Colonic mucosa (tissue), 4 donors: ENCODE measurements at regions of chr7 and their contacts with region 1.

Region 1: GRCh38 chr7:64562626-64563275 is at the start of gene ZNF680:
- DNase-seq: peak; percentile 97
- H3K4me3 ChIP-seq: peak within 1 kb of the TSS; percentile 83
- H3K27ac ChIP-seq: peak within 1 kb of the TSS; percentile 72
- H3K4me1 ChIP-seq: no peaks in the 10 kb centered on the region
- H3K27me3 ChIP-seq: no peaks in the 10 kb centered on the region
- CTCF ChIP-seq: no peak
- total RNA-seq, gene ZNF680: 7.2 to 11.4 TPM

Region 2: GRCh38 chr7:64313740-64314491 is 248.8 kb before region 1 on chr7 and contains the start of gene ZNF736:
- intact Hi-C with region 1: loop called (anchors 10 kb)
- DNase-seq: peak; percentile 91
- H3K4me3 ChIP-seq: peak within 1 kb of the TSS; percentile 91
- H3K27ac ChIP-seq: peak within 1 kb of the TSS; percentile 51
- H3K4me1 ChIP-seq: peaks cover 8% of the 10 kb centered on the region
- H3K27me3 ChIP-seq: no peaks in the 10 kb centered on the region
- CTCF ChIP-seq: no peak
- total RNA-seq, gene ZNF736: 7.9 to 15.2 TPM